MCF 10A (cell line): ENCODE measurements at regions of chr1 and their contacts with region 1.

Region 1: GRCh38 chr1:201468844-201469511 is at the start of gene PHLDA3:
- DNase-seq: peak; percentile 95
- H3K4me3 Mint-ChIP-seq: peak within 1 kb of the TSS; percentile 97
- H3K27ac Mint-ChIP-seq: peak within 1 kb of the TSS; percentile 90
- H3K4me1 Mint-ChIP-seq: peaks cover 55% of the 10 kb centered on the region
- H3K27me3 Mint-ChIP-seq: no peaks in the 10 kb centered on the region
- CTCF ChIP-seq: no peak
- total RNA-seq, gene PHLDA3: 169 and 204 TPM in 2 replicates

Region 2: DNA sequence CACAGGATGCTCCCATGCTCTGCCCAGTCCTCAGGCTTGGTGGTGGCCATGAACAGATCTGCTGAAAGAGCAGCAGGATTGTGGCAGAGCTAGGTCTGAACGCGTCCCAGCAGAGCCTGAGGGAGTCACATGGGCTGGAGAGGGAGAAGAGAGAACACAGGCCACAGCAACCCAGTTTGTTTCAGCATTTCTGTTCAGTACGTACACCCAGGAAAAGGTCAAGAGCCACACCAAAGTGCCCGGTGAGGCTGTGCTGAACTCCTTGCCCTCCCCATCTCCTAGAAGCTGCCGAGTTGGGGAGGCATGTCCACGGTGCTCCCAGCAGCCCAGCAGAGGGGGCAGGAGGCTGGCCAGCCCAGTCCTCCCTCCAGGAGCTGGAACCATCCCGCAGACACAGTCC is 180.2 kb before region 1 on chr1:
- CTCF ChIA-PET with region 1: no interaction called
- POLR2A ChIA-PET with region 1: interaction called, 14 read pairs
- intact Hi-C with region 1: no loop called
- DNase-seq: peak; percentile 64
- H3K4me3 Mint-ChIP-seq: peak overlapping the region; percentile 15
- H3K27ac Mint-ChIP-seq: peak overlapping the region; percentile 83
- H3K4me1 Mint-ChIP-seq: peaks cover 28% of the 10 kb centered on the region
- H3K27me3 Mint-ChIP-seq: no peaks in the 10 kb centered on the region
- CTCF ChIP-seq: peak; percentile 7

Region 3: DNA sequence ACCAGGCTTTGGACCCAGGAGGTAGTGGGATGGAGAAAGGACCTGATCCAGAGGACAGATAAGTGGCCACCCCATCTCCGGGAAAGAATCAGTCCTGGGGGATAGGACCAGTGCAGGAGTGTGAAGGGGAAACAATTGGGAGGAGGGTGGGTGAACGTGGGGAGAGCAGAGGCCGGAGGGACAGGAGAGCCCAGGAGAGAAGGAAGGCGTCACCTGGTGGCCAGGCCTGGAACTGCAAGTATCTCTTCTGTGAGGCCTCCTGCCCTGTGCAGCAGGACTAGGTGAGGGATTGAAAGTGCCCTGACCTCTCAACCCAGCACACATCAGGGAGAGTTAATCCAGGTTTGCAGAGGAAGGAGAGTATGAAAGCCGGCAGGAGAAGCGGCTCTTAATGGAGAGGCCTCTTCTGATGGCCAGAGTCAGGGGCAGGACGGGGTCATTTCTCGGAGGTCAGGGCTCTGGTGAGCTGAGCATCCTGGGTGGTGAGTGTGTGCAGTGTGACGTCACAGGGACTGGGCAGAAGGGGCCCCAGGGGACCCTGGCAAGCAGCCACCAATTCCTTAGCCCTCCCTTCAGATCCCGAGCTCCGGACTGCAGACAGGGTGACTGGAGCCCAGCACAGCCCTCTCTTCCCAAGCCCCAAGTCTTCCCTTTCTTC is 60.7 kb before region 1 on chr1:
- CTCF ChIA-PET with region 1: interaction called, 3 read pairs
- POLR2A ChIA-PET with region 1: no interaction called
- intact Hi-C with region 1: loop called (anchors 2 kb)
- DNase-seq: peak; percentile 90
- H3K4me3 Mint-ChIP-seq: no peak overlapping the region
- H3K27ac Mint-ChIP-seq: no peak overlapping the region
- H3K4me1 Mint-ChIP-seq: peaks cover 5% of the 10 kb centered on the region
- H3K27me3 Mint-ChIP-seq: peaks cover 32% of the 10 kb centered on the region
- CTCF ChIP-seq: peak; percentile 100

Region 4: GRCh38 chr1:201456499-201457309 is 12.3 kb before region 1 on chr1:
- CTCF ChIA-PET with region 1: interaction called, 250 read pairs
- POLR2A ChIA-PET with region 1: interaction called, 1,388 read pairs
- intact Hi-C with region 1: loop called (anchors 1 kb)
- DNase-seq: peak; percentile 97
- H3K4me3 Mint-ChIP-seq: no peak overlapping the region
- H3K27ac Mint-ChIP-seq: peak overlapping the region; percentile 67
- H3K4me1 Mint-ChIP-seq: peaks cover 49% of the 10 kb centered on the region
- H3K27me3 Mint-ChIP-seq: no peaks in the 10 kb centered on the region
- CTCF ChIP-seq: no peak

Region 5: GRCh38 chr1:201559679-201560162 is 90.7 kb after region 1 on chr1:
- CTCF ChIA-PET with region 1: no interaction called
- POLR2A ChIA-PET with region 1: no interaction called
- intact Hi-C with region 1: no loop called
- DNase-seq: peak; percentile 89
- H3K4me3 Mint-ChIP-seq: no peak overlapping the region
- H3K27ac Mint-ChIP-seq: peak overlapping the region; percentile 35
- H3K4me1 Mint-ChIP-seq: peaks cover 48% of the 10 kb centered on the region
- H3K27me3 Mint-ChIP-seq: no peaks in the 10 kb centered on the region
- CTCF ChIP-seq: peak; percentile 100